ENCODE measurements at regions of chr7 and their contacts with region 1.

Region 1: GRCh38 chr7:93046641-93047040 is 71.1 kb downstream of the SAMD9 start:
- DNase-seq: no peak
- ATAC-seq: peak; percentile 29
- H3K4me3 ChIP-seq: no peak overlapping the region
- H3K27ac ChIP-seq: no peak overlapping the region
- H3K4me1 ChIP-seq: peaks cover 7% of the 10 kb centered on the region
- H3K27me3 ChIP-seq: no peaks in the 10 kb centered on the region
- CTCF ChIP-seq: no peak
- EP300 ChIP-seq: no peak
- POLR2A ChIP-seq: no peak
- RAD21 ChIP-seq: no peak

Region 2: GRCh38 chr7:92904292-92905131 is 142.1 kb before region 1 on chr7:
- CTCF ChIA-PET with region 1: interaction called, 3 read pairs
- POLR2A ChIA-PET with region 1: no interaction called
- RAD21 ChIA-PET with region 1: interaction called, 5 read pairs
- SMC1A ChIA-PET with region 1: interaction called, 10 read pairs
- in situ Hi-C with region 1: no loop called
- intact Hi-C with region 1: loop called (anchors 5 kb)
- DNase-seq: peak; percentile 84
- ATAC-seq: peak; percentile 99
- H3K4me3 ChIP-seq: peak overlapping the region; percentile 4; the same call in 1 of the 2 replicates
- H3K27ac ChIP-seq: peak overlapping the region; percentile 80
- H3K4me1 ChIP-seq: peaks cover 8% of the 10 kb centered on the region
- H3K27me3 ChIP-seq: no peaks in the 10 kb centered on the region
- CTCF ChIP-seq: no peak
- EP300 ChIP-seq: peak; percentile 80 to 92
- POLR2A ChIP-seq: no peak
- RAD21 ChIP-seq: no peak